ENCODE measurements at regions of chr5 and their contacts with region 1.

Region 1: GRCh38 chr5:67879620-67880510 is 335.7 kb upstream of the PIK3R1 start:
- DNase-seq: peak; percentile 93
- H3K4me3 ChIP-seq: no peak overlapping the region
- H3K27ac ChIP-seq: peak overlapping the region; percentile 36
- H3K4me1 ChIP-seq: peaks cover 37% of the 10 kb centered on the region
- H3K27me3 ChIP-seq: no peaks in the 10 kb centered on the region
- CTCF ChIP-seq: no peak

Region 2: DNA sequence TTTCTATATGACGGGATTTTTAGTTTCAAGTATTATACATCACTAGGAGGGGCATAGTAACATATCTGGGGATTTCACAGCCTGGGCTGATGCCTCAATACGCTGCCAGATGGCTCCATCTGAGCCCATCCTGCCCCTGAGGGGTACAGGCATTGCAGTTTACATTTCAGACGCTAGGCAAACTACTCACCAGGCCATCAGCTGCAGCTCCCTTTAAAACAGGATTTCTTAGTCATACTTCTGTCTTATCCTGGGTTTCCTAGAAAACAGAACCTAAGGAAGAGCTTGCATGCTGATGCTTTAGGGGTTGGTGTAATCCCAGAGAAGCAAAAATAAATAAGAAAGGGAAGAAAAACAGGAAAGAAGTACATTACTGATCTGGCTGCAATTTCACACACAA is 37.1 kb before region 1 on chr5:
- CTCF ChIA-PET with region 1: no interaction called
- dilution Hi-C with region 1: no loop called
- in situ Hi-C with region 1: no loop called
- intact Hi-C with region 1: loop called (anchors 1 kb)
- DNase-seq: peak; percentile 5
- H3K4me3 ChIP-seq: no peak overlapping the region
- H3K27ac ChIP-seq: no peak overlapping the region
- H3K4me1 ChIP-seq: no peaks in the 10 kb centered on the region
- H3K27me3 ChIP-seq: no peaks in the 10 kb centered on the region
- CTCF ChIP-seq: peak; percentile 58 to 59

Region 3: DNA sequence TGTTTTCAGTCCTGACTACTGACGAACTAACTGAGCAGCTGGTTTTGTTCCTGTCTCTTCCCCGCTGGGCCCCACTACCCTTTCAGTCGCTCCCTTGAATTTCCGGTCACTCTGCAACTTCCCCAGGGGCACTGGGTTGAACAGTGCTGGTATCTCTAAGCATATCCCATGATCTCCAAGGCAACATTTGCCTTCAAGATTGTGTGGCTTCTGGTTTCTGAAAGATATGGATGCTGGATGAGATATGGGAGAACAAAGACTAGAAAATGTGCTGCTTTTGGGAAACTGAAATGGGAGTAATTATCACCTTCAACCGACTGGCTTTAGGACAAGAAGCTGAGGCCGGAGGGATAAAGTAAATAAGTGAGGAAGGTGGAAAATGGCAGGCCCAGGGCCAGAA is 77.5 kb after region 1 on chr5:
- CTCF ChIA-PET with region 1: no interaction called
- dilution Hi-C with region 1: loop called (anchors 5 kb)
- in situ Hi-C with region 1: no loop called
- intact Hi-C with region 1: no loop called
- DNase-seq: no peak
- H3K4me3 ChIP-seq: no peak overlapping the region
- H3K27ac ChIP-seq: no peak overlapping the region
- H3K4me1 ChIP-seq: peaks cover 11% of the 10 kb centered on the region
- H3K27me3 ChIP-seq: no peaks in the 10 kb centered on the region
- CTCF ChIP-seq: no peak

Measured in mammary epithelial cell (primary cell).